Activated CD4-positive, alpha-beta memory T cell treated with anti-CD3 and anti-CD28 coated beads, Interleukin-2, amount 10 ng/mL, durations not matched to agents 7 days and 5 days (primary cell): ENCODE measurements at regions of chr3 and their contacts with region 1.

Region 1: DNA sequence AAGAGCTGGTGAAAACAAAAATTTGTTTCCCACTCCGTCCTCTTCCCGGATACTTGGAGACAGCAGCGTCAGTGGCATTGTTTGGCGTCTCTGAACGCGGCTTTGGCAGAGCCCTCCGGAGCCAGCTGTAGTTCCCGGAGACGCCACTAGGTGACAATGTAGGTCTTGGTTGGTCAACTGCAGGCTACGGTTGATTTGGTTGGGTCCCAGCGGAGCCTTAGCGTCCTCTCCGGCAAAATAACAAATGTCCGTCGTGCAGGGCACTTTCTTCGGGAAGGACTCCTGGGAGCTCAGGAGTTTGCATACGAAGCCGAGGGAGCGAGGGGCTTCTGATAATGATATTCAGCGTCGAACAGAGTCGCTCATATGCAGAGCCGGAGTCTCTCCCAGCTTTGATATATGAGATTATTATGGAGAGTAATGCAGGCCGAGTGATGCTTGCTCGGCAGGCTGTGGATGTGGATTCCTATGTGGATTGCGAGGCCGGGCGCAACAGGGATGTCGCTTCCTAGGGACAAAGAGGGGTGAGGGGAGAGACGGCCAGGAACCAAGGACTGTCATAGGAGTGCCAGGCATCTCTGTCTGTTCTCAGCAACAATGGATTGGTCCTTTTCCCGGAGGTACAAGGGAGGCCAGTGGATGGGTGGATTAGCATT is 74.8 kb downstream of the IL20RB start:
- DNase-seq: peak; percentile 76
- H3K4me3 Mint-ChIP-seq: no peak overlapping the region
- H3K27ac Mint-ChIP-seq: no peak overlapping the region
- H3K4me1 Mint-ChIP-seq: peaks cover 7% of the 10 kb centered on the region
- H3K27me3 Mint-ChIP-seq: peaks cover 13% of the 10 kb centered on the region

Region 2: GRCh38 chr3:136919799-136920580 is 112.6 kb before region 1 on chr3:
- CTCF ChIA-PET with region 1: no interaction called
- POLR2A ChIA-PET with region 1: no interaction called
- DNase-seq: no peak
- H3K4me3 Mint-ChIP-seq: peak overlapping the region; percentile 56
- H3K27ac Mint-ChIP-seq: peak overlapping the region; percentile 85
- H3K4me1 Mint-ChIP-seq: peaks cover 67% of the 10 kb centered on the region
- H3K27me3 Mint-ChIP-seq: no peaks in the 10 kb centered on the region

Region 3: GRCh38 chr3:137020315-137020714 is 12.3 kb before region 1 on chr3:
- CTCF ChIA-PET with region 1: interaction called, 24 read pairs
- POLR2A ChIA-PET with region 1: no interaction called
- DNase-seq: no peak
- H3K4me3 Mint-ChIP-seq: no peak overlapping the region
- H3K27ac Mint-ChIP-seq: no peak overlapping the region
- H3K4me1 Mint-ChIP-seq: no peaks in the 10 kb centered on the region
- H3K27me3 Mint-ChIP-seq: peaks cover 4% of the 10 kb centered on the region

Region 4: GRCh38 chr3:137052298-137052697 is 19.7 kb after region 1 on chr3:
- CTCF ChIA-PET with region 1: interaction called, 13 read pairs
- POLR2A ChIA-PET with region 1: no interaction called
- DNase-seq: no peak
- H3K4me3 Mint-ChIP-seq: no peak overlapping the region
- H3K27ac Mint-ChIP-seq: no peak overlapping the region
- H3K4me1 Mint-ChIP-seq: no peaks in the 10 kb centered on the region
- H3K27me3 Mint-ChIP-seq: peaks cover 2% of the 10 kb centered on the region

Region 5: GRCh38 chr3:137171829-137172603 is 139.4 kb after region 1 on chr3:
- CTCF ChIA-PET with region 1: no interaction called
- POLR2A ChIA-PET with region 1: no interaction called
- DNase-seq: no peak
- H3K4me3 Mint-ChIP-seq: no peak overlapping the region
- H3K27ac Mint-ChIP-seq: no peak overlapping the region
- H3K4me1 Mint-ChIP-seq: no peaks in the 10 kb centered on the region
- H3K27me3 Mint-ChIP-seq: no peaks in the 10 kb centered on the region

Region 6: DNA sequence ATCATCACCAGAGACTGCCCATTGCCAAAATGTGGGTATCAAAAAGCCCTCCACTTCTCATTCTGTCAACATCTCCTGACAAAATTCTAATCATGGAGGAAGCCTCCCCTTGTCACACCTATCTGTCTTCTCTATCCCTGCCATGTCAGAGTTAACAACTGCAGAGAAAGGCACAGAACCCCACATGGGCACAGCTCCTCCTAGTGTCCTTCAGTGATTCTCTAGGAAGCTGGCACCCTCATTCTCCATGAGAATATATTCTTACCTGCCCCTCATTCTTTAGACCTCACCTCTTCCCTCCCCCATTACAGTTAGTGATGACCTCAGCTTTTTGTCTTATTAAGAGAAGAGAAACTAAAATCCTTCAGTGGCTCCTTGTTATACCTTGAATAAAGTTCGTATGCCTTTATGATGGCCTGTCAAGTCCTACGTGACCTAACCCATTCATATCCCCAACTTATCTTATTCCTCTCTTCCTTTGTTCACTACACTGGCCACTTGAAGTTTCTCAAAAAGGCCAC is 1252.4 kb after region 1 on chr3:
- CTCF ChIA-PET with region 1: no interaction called
- POLR2A ChIA-PET with region 1: no interaction called
- DNase-seq: no peak
- H3K4me3 Mint-ChIP-seq: no peak overlapping the region
- H3K27ac Mint-ChIP-seq: no peak overlapping the region
- H3K4me1 Mint-ChIP-seq: no peaks in the 10 kb centered on the region
- H3K27me3 Mint-ChIP-seq: no peaks in the 10 kb centered on the region